Ascending aorta (tissue), 2 donors: ENCODE measurements at regions of chr11 and their contacts with region 1.

Region 1: DNA sequence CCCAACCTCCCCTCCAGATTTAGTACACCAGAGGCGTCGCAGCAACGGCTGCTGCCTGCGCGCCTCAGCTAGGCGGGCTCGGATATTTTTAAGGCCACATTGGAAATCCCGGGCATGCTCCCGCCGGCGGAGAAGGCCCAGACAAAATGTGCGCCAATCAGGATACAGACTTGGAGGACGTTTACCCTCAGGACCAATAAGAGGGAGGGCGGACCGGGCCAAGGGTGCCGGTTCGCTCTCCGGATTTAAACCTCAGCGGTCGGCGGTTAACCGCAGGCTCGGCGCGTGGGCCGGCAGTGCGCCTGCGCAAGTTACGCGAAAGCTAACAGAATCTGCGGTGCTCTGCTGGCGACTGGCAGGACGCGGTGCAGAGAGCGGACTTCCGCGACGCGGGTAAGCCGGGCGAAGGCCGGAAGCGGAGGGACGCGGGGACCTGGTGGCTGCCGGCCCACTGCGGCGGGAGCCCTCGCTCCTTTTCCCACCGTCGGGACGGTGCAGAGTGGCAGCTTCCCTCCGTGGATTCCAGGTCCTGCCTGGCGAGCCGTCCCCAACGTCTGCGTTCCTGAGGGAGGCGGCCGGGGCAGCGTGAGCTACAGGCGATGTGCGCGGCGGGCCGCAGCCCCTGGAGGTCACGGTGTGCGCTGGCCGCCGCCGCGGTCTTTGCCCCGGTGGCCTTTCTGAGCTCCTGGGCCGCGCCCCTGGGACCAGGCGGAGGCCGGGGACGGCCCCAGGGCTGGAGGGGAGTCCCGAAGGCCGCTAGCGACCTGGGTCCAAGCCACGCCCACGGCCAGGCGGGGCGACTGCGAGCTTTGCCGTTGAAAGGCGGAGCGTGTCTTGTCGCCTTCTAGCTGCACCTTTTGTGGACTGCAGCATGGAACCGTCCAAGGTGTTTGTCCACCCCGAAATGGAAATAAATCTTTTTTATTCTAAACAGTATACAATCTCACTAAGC is at the start of gene HYLS1:
- DNase-seq: peak; percentile 81 to 97
- H3K4me3 ChIP-seq: peak within 1 kb of the TSS; percentile 71 to 90
- H3K27ac ChIP-seq: peak within 1 kb of the TSS; percentile 91 to 98
- H3K4me1 ChIP-seq: peaks cover 2% of the 10 kb centered on the region in 2 donors
- H3K27me3 ChIP-seq: no peaks in the 10 kb centered on the region
- CTCF ChIP-seq: peak in 2 of 3 experiments; percentile 4 to 34
- total RNA-seq, gene HYLS1: 6.5 TPM

Region 2: DNA sequence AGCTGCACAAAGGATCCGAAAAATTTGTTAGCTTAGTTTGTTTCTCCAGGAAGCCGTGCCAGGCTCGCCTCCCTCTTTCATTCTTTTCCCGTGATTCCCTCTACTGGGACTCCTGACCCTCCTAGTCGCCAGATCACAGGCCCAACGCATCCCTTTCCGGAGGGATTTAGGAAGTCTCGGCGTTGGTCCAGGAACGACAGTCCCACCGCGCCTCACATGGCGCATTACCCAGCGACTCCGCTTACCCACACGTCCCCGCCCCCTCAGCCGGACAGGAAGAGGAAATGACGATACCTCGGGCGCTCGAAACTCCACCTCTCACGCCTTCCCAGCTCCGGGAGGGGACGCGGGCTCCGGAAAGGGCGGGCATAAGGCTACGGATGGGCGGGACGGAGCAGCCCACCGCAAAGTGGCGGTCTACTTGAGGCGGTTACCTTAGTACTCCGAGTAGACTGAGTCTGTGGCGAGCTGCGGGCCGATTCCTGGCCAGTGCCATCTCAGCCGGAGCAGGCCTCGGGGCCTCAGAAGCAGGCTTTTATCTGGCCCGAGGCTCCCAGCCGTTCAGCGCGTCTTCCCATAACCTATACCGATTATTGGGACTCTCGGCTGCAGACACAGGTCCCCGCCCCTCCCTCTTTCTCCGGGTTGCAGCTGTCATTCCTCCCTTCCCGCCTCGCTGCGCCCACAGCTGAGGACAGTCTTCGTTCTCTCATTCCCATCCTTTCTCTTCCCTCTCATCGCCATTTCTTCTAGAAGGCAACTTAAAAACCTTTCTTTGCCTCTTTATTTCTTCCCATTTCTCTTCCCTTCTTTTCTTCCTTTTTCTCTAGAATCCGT is 933.7 kb before region 1 on chr11 and contains the start of gene CCDC15:
- intact Hi-C with region 1: loop called (anchors 5 kb)
- DNase-seq: peak; percentile 88 to 98
- H3K4me3 ChIP-seq: peak within 1 kb of the TSS; percentile 62 to 71
- H3K27ac ChIP-seq: peak within 1 kb of the TSS; percentile 68 to 78
- H3K4me1 ChIP-seq: peaks cover 0 to 8% of the 10 kb centered on the region in 2 donors
- H3K27me3 ChIP-seq: no peaks in the 10 kb centered on the region
- CTCF ChIP-seq: no peak
- total RNA-seq, gene CCDC15: not detected

Region 3: DNA sequence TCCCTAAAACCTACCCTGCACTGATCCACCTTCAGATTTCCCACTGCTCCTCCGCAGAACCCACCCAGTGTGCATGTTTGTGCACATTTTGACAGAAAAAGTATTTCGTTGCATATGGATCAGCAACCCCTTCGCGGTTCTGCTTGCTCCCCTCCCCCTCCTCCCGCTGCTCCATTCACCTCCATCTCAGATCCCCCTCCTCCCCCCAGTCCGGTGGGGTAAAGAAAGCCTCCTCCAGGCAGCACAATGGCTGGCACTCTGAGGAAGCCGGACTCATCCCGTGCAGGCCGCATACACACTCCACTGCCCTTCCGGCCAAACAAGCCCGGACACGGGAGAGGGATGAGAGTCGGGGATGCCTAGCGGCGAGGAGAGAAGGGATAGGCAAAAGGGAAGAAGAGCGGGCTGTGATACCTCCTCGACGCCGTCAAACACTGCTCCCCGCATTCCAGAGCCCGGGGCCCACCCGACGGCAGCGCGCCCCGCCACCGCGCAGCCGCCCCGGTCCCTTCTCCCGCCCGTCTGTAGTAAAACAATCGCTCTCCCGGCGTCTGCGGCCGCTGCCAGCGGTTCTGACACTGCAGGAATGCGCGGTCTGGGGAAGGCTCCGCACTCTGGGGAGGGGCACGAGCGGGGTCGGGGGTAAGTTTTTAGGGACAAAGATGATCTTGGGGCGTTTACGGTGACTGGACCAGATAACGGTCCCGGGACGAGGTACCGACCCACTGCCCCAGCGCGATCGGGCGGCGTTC is 392.5 kb before region 1 on chr11:
- intact Hi-C with region 1: loop called (anchors 10 kb)
- DNase-seq: peak in 1 of 2 donors; percentile 72
- H3K4me3 ChIP-seq: peak overlapping the region; percentile 63 to 98
- H3K27ac ChIP-seq: peak overlapping the region; percentile 80 to 96
- H3K4me1 ChIP-seq: peaks cover 7 to 8% of the 10 kb centered on the region in 2 donors
- H3K27me3 ChIP-seq: no peaks in the 10 kb centered on the region
- CTCF ChIP-seq: no peak

Region 4: DNA sequence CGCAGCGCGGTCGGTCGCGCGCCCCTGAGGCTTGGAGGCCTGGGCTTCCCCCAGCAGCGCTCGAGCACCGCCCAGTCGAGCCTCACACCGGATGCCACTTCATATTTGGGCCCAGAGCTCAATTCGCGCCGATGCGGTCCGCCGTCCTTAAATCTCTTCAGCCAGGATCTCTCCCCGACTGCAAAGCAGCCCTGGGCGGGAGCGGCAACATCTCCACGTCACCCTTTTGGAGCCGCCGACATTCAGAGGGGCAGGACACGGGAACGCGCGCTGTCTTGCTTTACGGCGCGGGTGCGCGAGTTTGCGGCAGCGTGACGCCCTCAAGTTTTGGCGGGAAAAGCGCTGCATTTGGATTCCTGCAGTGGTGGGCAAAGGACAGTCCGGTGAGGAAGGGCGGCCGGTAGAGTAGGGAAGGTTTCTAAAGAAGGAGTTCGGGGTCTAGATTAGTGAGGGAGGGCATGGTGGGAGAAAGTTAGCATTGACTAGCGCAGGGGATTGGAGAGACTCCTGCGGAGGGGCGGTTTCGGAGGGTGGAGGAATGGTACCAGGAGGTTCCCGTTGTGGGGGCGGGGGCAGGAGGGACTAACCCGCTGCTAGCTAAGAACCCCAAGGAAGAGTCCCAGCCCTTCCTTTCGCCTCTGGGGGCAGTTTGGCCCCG is 261.9 kb before region 1 on chr11:
- intact Hi-C with region 1: loop called (anchors 5 kb)
- DNase-seq: peak; percentile 34 to 92
- H3K4me3 ChIP-seq: peak overlapping the region; percentile 65 to 68
- H3K27ac ChIP-seq: peak overlapping the region; percentile 88 to 95
- H3K4me1 ChIP-seq: peaks cover 0 to 17% of the 10 kb centered on the region in 2 donors
- H3K27me3 ChIP-seq: no peaks in the 10 kb centered on the region
- CTCF ChIP-seq: no peak

Region 5: DNA sequence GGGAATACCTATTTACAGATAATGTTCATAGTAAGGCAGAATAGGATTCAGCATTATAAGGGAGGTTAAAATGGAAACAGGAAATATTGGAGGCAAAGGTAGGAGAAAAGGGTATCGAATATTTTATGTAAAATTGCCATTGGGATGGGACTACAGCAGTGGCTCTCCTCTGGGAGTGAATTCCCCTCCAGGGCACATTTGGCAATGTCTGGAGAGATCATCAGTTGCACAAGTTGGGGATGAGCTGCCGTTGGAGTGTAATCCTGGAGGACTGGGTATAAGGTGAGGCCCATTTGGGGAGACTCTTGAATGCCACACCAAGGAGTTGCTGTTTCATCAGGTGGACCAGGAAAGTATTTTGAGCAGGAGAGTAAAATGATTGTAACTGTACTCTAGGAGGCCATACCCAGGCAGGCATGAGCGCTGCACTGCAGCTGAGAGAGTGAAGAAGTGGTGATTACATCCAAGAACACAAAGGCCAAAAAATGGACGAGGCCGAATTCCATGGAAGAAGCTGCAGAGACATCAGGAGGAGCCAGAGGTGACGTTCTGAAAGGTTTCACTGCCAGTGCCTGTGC is 198.3 kb before region 1 on chr11:
- intact Hi-C with region 1: no loop called
- DNase-seq: no peak
- H3K4me3 ChIP-seq: no peak overlapping the region
- H3K27ac ChIP-seq: no peak overlapping the region
- H3K4me1 ChIP-seq: no peaks in the 10 kb centered on the region
- H3K27me3 ChIP-seq: no peaks in the 10 kb centered on the region
- CTCF ChIP-seq: no peak

Region 6: DNA sequence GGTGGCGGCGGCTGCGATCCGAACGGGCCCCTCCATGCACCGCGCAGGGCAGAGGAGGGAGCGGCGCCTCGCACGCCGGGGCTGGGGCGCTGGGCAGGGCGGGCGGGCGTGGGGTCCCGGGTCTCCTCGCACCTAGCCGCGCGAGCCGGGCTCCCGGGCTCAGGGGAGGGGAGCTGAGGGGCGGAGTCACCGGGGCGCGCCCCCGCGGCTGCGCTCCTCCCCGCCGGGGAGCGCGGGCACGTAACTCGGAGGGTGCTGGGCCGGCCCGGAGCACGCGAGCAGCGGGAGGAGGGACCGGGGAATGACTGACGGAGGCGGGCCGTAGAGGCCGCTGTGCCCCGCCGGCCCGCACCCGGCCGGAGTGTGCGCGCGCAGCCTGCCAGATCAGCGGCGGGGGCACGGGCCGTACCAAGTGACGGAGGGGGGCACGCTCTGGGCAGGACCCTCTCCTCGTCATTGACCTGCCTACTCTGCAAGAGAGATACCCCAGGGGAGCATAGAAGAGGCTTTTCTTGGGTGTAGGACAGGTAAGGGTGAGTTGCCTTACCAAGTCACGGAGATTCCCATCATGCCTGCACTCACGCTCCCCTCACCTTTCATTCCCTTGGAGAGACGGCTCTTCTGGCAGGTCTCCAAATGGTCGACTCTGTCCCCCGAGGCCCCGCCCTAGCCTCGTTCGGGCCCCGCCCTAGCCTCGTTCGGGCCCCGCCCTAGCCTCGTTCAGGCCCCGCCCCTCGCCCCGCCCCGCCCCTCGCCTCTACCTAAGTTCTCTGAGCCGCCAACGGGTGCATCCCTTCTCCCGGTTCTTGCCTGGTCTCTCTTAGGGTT is 175.2 kb after region 1 on chr11 and contains the start of gene CDON:
- intact Hi-C with region 1: loop called (anchors 5 kb)
- DNase-seq: peak; percentile 43 to 93
- H3K4me3 ChIP-seq: peak within 1 kb of the TSS; percentile 78 to 89
- H3K27ac ChIP-seq: peak within 1 kb of the TSS; percentile 64 to 68
- H3K4me1 ChIP-seq: peaks cover 0 to 8% of the 10 kb centered on the region in 2 donors
- H3K27me3 ChIP-seq: no peaks in the 10 kb centered on the region
- CTCF ChIP-seq: peak in 1 of 3 experiments; percentile 12
- total RNA-seq, gene CDON: 33.0 TPM

Region 7: GRCh38 chr11:126268708-126269579 is 381.3 kb after region 1 on chr11 and contains the starts of genes FOXRED1 and SRPRA:
- intact Hi-C with region 1: loop called (anchors 5 kb)
- DNase-seq: peak; percentile 97 to 100
- H3K4me3 ChIP-seq: peak within 1 kb of the TSS; percentile 81 to 93
- H3K27ac ChIP-seq: peak within 1 kb of the TSS; percentile 90 to 91
- H3K4me1 ChIP-seq: peaks cover 0 to 13% of the 10 kb centered on the region in 2 donors
- H3K27me3 ChIP-seq: no peaks in the 10 kb centered on the region
- CTCF ChIP-seq: no peak
- total RNA-seq, gene FOXRED1: 1.8 TPM
- total RNA-seq, gene SRPRA: 49.7 TPM